Activated CD4-positive, alpha-beta T cell treated with anti-CD3 and anti-CD28 coated beads for 36 hours (primary cell): ENCODE measurements at regions of chr17 and their contacts with region 1.

Region 1: DNA sequence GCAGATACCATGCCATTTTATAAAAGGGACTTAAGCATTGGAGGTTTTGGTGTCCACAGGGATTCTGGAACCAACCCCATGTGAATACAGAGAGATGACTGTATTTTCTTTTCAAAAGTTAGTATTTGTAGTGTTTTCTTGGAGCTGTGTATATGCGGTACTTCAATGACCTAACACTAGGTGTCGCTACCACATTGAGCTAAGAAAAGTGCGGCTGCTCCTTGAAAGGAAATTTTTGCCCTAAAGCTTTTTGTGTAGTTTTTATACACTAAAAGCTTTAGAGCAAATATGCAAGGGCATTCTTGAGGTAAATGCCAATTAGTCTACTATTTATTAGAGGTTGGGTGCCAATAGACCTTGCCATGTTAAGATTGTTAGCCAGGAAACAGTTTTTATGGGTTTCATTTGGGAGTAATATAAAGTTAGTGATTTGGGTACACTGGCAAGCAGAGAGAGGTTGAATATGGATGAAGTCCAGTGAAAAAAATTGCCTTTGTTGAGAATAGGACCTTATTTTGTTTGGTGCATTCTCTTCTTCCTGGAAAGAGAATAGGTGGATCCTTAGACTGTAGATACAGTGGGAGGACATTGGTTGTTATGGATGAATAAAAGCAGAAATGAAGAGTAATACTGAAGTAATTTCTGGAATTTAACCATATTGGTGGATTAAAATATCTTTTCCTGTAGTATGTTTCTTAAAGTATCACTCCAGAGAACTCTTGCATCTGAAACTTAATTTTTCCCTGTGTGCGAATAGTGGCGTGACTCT is 43.3 kb downstream of the BCAS3 start:
- DNase-seq: peak; percentile 56
- ATAC-seq: no peak
- H3K4me3 Mint-ChIP-seq: no peak overlapping the region
- H3K27ac Mint-ChIP-seq: no peak overlapping the region
- H3K4me1 Mint-ChIP-seq: peaks cover 3% of the 10 kb centered on the region
- H3K27me3 Mint-ChIP-seq: no peaks in the 10 kb centered on the region

Region 2: GRCh38 chr17:60959011-60959410 is 238.1 kb after region 1 on chr17:
- CTCF ChIA-PET with region 1: interaction called, 3 read pairs
- POLR2A ChIA-PET with region 1: no interaction called
- intact Hi-C with region 1: loop called in 1 of 2 experiments (anchors 10 kb)
- DNase-seq: no peak
- ATAC-seq: no peak
- H3K4me3 Mint-ChIP-seq: no peak overlapping the region
- H3K27ac Mint-ChIP-seq: no peak overlapping the region
- H3K4me1 Mint-ChIP-seq: no peaks in the 10 kb centered on the region
- H3K27me3 Mint-ChIP-seq: no peaks in the 10 kb centered on the region

Region 3: GRCh38 chr17:61002316-61002736 is 281.4 kb after region 1 on chr17:
- CTCF ChIA-PET with region 1: interaction called, 4 read pairs
- POLR2A ChIA-PET with region 1: no interaction called
- intact Hi-C with region 1: loop called in 1 of 2 experiments (anchors 2 kb)
- DNase-seq: no peak
- ATAC-seq: no peak
- H3K4me3 Mint-ChIP-seq: no peak overlapping the region
- H3K27ac Mint-ChIP-seq: no peak overlapping the region
- H3K4me1 Mint-ChIP-seq: no peaks in the 10 kb centered on the region
- H3K27me3 Mint-ChIP-seq: no peaks in the 10 kb centered on the region

Region 4: GRCh38 chr17:61389670-61390478 is 668.9 kb after region 1 on chr17:
- CTCF ChIA-PET with region 1: interaction called, 3 read pairs
- POLR2A ChIA-PET with region 1: no interaction called
- intact Hi-C with region 1: loop called in 1 of 2 experiments (anchors 1 kb)
- DNase-seq: peak; percentile 74
- ATAC-seq: peak; percentile 74
- H3K4me3 Mint-ChIP-seq: no peak overlapping the region
- H3K27ac Mint-ChIP-seq: no peak overlapping the region
- H3K4me1 Mint-ChIP-seq: no peaks in the 10 kb centered on the region
- H3K27me3 Mint-ChIP-seq: peaks cover 7% of the 10 kb centered on the region